Endothelial cell of umbilical vein (primary cell): ENCODE measurements at regions of chr2 and their contacts with region 1.

Region 1: DNA sequence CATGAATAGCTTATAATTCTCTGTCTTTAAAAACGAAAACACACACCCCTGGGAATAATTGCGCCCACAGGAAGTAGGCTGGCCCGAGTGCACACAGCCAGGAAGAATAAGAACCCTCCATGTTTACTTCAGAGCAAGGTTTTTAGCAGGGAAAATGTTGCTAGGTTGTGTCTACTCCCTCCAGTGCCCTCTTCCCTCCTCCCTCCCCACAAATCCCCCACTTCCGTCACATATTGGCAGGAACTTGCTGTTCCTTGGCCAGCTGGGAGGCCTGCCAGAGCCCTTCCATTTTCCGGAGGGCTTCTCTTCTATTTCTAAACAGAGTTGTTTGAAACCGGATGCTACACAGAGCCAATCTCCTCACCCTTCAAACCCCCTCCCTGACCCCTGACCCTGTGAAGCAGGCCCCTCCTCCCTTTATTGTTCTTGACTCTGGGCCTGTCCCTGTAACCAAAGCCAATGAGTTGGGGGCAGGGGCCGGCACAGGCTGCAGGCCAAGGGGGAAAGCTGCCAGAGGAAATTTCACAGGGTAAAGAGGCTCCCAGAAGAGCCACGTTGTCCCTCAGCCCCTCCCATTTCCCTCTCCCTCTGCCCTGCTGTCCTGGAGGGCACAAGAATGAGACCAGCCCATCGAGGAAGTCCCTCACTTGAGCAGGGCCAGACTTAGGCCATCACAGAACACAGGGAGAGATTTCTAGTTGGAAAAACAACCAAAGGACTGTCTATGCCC is 49.8 kb upstream of the LGALSL start:
- DNase-seq: peak; percentile 99
- H3K4me3 ChIP-seq: peak overlapping the region in 1 of 3 experiments; percentile 26
- H3K27ac ChIP-seq: peak overlapping the region; percentile 72
- H3K4me1 ChIP-seq: peaks cover 35% of the 10 kb centered on the region
- H3K27me3 ChIP-seq: peaks cover 7 to 17% of the 10 kb centered on the region in 2 experiments
- CTCF ChIP-seq: no peak
- POLR2A ChIP-seq: no peak

Region 2: GRCh38 chr2:63942788-63943187 is 461.4 kb before region 1 on chr2:
- CTCF ChIA-PET with region 1: no interaction called
- POLR2A ChIA-PET with region 1: no interaction called
- dilution Hi-C with region 1: no loop called
- intact Hi-C with region 1: no loop called
- DNase-seq: no peak
- H3K4me3 ChIP-seq: no peak overlapping the region
- H3K27ac ChIP-seq: no peak overlapping the region
- H3K4me1 ChIP-seq: no peaks in the 10 kb centered on the region
- H3K27me3 ChIP-seq: no peaks in the 10 kb centered on the region
- CTCF ChIP-seq: no peak
- POLR2A ChIP-seq: no peak

Region 3: GRCh38 chr2:64144057-64145013 is 259.8 kb before region 1 on chr2 and contains the start of gene PELI1:
- CTCF ChIA-PET with region 1: no interaction called
- POLR2A ChIA-PET with region 1: no interaction called
- dilution Hi-C with region 1: no loop called
- intact Hi-C with region 1: loop called (anchors 5 kb)
- DNase-seq: peak; percentile 99
- H3K4me3 ChIP-seq: peak within 1 kb of the TSS; percentile 70 to 90 (median 83)
- H3K27ac ChIP-seq: peak within 1 kb of the TSS; percentile 74
- H3K4me1 ChIP-seq: peaks cover 18% of the 10 kb centered on the region
- H3K27me3 ChIP-seq: peaks cover 0 to 4% of the 10 kb centered on the region in 2 experiments
- CTCF ChIP-seq: peak in 1 of 2 donors; percentile 34
- POLR2A ChIP-seq: peak; percentile 95
- total RNA-seq, gene PELI1: 30.9 and 39.9 TPM in 2 replicates

Region 4: DNA sequence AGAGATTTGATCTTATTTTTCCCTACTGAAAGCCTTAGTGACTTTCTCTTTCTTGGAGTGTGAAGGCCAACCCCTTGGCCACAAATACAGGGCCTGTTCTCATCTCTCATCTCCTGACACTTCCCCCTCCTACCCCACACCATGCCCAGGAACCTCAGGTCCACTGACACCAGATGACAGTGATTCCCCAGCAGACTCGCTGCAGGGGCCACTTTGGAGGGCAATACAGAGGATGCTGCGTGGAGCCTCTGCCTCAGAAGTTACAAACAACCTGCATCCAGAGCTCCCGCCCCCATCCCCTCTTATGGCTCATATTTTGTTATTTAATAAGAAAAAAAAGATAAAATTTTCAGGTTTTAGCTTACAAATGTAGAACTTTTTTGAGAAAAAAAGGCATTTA is 20.3 kb before region 1 on chr2:
- CTCF ChIA-PET with region 1: no interaction called
- POLR2A ChIA-PET with region 1: no interaction called
- dilution Hi-C with region 1: no loop called
- intact Hi-C with region 1: loop called (anchors 2 kb)
- DNase-seq: no peak
- H3K4me3 ChIP-seq: no peak overlapping the region
- H3K27ac ChIP-seq: no peak overlapping the region
- H3K4me1 ChIP-seq: no peaks in the 10 kb centered on the region
- H3K27me3 ChIP-seq: peaks cover 4 to 8% of the 10 kb centered on the region in 2 experiments
- CTCF ChIP-seq: no peak
- POLR2A ChIP-seq: no peak

Region 5: GRCh38 chr2:64493788-64494187 is 89.6 kb after region 1 on chr2:
- CTCF ChIA-PET with region 1: no interaction called
- POLR2A ChIA-PET with region 1: no interaction called
- dilution Hi-C with region 1: no loop called
- intact Hi-C with region 1: loop called (anchors 1 kb)
- DNase-seq: no peak
- H3K4me3 ChIP-seq: no peak overlapping the region
- H3K27ac ChIP-seq: no peak overlapping the region
- H3K4me1 ChIP-seq: peaks cover 29% of the 10 kb centered on the region
- H3K27me3 ChIP-seq: peaks cover 20% of the 10 kb centered on the region in 2 experiments
- CTCF ChIP-seq: no peak
- POLR2A ChIP-seq: no peak